ENCODE measurements at regions of chrX and their contacts with region 1.

Region 1: DNA sequence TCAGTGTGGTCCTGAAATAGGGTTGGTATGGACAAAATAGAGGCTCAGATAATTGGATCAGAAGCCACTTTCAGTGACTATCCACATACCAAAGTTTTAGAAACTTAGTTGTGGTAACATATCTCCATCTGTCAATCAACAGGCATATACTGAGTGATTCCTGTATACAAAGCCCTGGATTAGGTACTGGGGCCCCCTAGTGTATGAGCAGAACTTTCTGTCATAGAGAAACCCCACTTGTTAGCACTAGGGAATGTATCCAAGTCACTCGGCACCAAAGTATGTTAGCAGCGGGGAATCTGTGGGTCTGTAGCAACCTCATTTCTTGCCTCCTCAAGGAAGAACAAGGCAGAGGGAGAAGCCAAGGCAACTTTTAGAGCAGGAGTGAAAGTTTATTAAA is 50.7 kb downstream of the MAP7D3 start:
- DNase-seq: peak; percentile 18
- H3K4me3 Mint-ChIP-seq: no peak overlapping the region
- H3K27ac Mint-ChIP-seq: no peak overlapping the region
- H3K4me1 Mint-ChIP-seq: peaks cover 27% of the 10 kb centered on the region
- H3K27me3 Mint-ChIP-seq: no peaks in the 10 kb centered on the region

Region 2: GRCh38 chrX:136168929-136169735 is 31.3 kb before region 1 on chrX:
- CTCF ChIA-PET with region 1: interaction called, 3 read pairs
- intact Hi-C with region 1: loop called (anchors 5 kb)
- DNase-seq: no peak
- H3K4me3 Mint-ChIP-seq: no peak overlapping the region
- H3K27ac Mint-ChIP-seq: no peak overlapping the region
- H3K4me1 Mint-ChIP-seq: peaks cover 1% of the 10 kb centered on the region
- H3K27me3 Mint-ChIP-seq: no peaks in the 10 kb centered on the region

Measured in activated naive CD4-positive, alpha-beta T cell treated with anti-CD3 and anti-CD28 coated beads for 36 hours (primary cell).